ENCODE measurements at regions of chr17 and their contacts with region 1.

Region 1: DNA sequence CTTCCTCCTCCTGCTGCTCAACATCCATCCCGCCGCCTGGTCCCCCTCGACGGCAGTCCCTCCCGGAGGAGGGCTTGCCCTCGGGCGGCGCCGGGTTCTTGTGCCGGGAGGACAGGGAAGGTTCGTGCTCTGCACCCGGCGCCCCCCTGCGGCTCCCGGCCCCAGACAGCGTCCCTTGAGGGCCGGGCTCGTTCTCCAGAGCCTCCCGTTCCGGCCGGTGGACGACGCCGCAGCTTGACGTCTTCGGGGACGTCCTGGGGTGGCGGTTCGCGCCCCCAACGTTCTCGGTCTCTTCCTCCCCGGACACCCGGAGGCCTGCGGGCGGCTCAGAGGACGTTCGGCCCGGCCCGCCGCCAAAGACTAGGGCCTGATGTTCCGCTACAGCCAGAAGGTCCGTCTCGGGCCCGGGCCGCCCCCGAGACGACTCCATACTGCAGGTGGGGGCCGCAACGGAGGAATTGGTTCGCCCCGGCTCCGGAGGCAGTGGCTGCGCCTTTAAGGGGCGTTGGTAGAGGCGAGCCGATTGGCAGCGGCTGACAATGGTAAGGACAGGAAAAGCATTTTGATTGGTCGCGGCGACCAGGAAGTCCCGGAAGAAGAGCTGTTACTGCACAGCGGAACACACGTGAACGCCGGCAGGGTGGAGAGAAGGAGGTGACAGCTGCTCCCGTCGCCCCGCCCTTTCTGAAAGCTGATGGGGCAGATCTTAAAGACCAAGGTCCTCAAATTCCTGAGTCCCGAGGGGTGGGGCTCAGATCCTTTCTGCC is at the start of gene BORCS6:
- DNase-seq: peak; percentile 97 to 99 (median 98)
- H3K4me3 ChIP-seq: peak within 1 kb of the TSS; percentile 49 to 90 (median 63)
- H3K27ac ChIP-seq: peak within 1 kb of the TSS; percentile 95 to 96
- H3K4me1 ChIP-seq: peaks cover 8 to 36% (median 20%) of the 10 kb centered on the region in 3 donors
- H3K27me3 ChIP-seq: no peaks in the 10 kb centered on the region
- CTCF ChIP-seq: no peak
- total RNA-seq, gene BORCS6: 8.6 TPM

Region 2: DNA sequence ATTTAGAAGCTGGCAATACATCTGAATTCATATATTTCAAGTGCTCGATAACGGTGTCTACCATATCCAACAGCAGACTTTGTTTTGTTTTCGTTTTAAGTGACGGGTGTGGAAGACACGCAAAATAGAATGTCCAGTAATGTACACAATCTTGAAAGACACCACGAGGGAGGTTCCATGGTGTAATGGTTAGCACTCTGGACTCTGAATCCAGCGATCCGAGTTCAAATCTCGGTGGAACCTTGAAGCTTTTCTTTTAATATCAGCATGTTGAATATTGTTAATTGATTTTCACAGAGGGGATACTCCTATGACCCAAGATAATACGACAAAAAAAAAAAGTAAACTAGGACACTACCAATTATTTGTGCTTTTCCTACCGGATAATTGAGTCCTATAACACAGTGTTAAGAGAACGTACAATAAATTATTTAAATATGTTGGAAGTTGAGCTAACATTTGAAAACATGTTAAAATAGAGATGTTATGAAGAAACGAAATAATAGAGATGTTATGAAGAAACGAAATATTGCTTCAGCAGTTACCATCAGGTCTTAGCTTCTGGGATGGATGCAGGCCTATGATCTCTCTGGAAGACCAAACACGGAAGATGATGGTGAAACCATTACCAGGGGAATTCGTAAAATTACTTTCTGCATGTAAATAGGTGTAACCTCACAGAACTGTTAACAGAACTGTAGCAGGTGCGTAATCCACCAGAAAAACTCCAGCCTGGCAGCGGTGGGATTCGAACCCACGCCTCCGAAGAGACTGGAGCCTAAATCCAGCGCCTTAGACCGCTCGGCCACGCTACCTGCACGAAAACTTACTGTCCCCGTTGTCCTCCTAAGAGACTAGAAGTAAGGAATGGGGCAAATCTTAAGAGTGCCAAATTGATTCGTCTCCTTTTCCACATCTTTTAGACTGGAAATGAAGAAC is 70.0 kb before region 1 on chr17:
- intact Hi-C with region 1: loop called (anchors 10 kb)
- DNase-seq: peak; percentile 91 to 97 (median 93)
- H3K4me3 ChIP-seq: peak overlapping the region; percentile 74 to 80 (median 75)
- H3K27ac ChIP-seq: no peak overlapping the region
- H3K4me1 ChIP-seq: peaks cover under 1 to 43% (median 22%) of the 10 kb centered on the region in 3 donors
- H3K27me3 ChIP-seq: peaks cover 29% of the 10 kb centered on the region
- CTCF ChIP-seq: no peak